ENCODE measurements at regions of chr5 and their contacts with region 1.

Region 1: GRCh38 chr5:79495319-79495718 is 18.6 kb downstream of the HOMER1 start:
- DNase-seq: no peak
- ATAC-seq: no peak
- H3K4me3 ChIP-seq: no peak overlapping the region
- H3K4me3 Mint-ChIP-seq: no peak overlapping the region
- H3K27ac ChIP-seq: no peak overlapping the region
- H3K27ac Mint-ChIP-seq: no peak overlapping the region
- H3K4me1 ChIP-seq: no peaks in the 10 kb centered on the region
- H3K4me1 Mint-ChIP-seq: no peaks in the 10 kb centered on the region
- H3K27me3 ChIP-seq: no peaks in the 10 kb centered on the region
- H3K27me3 Mint-ChIP-seq: peaks cover 5 to 6% of the 10 kb centered on the region in 2 donors

Region 2: GRCh38 chr5:79456890-79457583 is 38.3 kb before region 1 on chr5:
- CTCF ChIA-PET with region 1: interaction called in 1 of 2 experiments, 11 read pairs
- POLR2A ChIA-PET with region 1: interaction called in 1 of 2 experiments, 3 read pairs
- DNase-seq: no peak
- ATAC-seq: no peak
- H3K4me3 ChIP-seq: no peak overlapping the region
- H3K4me3 Mint-ChIP-seq: no peak overlapping the region
- H3K27ac ChIP-seq: no peak overlapping the region
- H3K27ac Mint-ChIP-seq: no peak overlapping the region
- H3K4me1 ChIP-seq: no peaks in the 10 kb centered on the region
- H3K4me1 Mint-ChIP-seq: no peaks in the 10 kb centered on the region
- H3K27me3 ChIP-seq: no peaks in the 10 kb centered on the region
- H3K27me3 Mint-ChIP-seq: peaks cover 0 to 2% of the 10 kb centered on the region in 2 donors